Endothelial cell of umbilical vein (primary cell): ENCODE measurements at regions of chr1 and their contacts with region 1.

Region 1: GRCh38 chr1:84433258-84434080 is 35.2 kb downstream of the DNASE2B start:
- DNase-seq: peak; percentile 81
- H3K4me3 ChIP-seq: peak overlapping the region in 1 of 3 experiments; percentile 52
- H3K27ac ChIP-seq: peak overlapping the region; percentile 69
- H3K4me1 ChIP-seq: peaks cover 5% of the 10 kb centered on the region
- H3K27me3 ChIP-seq: no peaks in the 10 kb centered on the region
- CTCF ChIP-seq: peak; percentile 64 to 67
- POLR2A ChIP-seq: no peak

Region 2: GRCh38 chr1:83931658-83932253 is 501.7 kb before region 1 on chr1:
- CTCF ChIA-PET with region 1: interaction called, 4 read pairs
- POLR2A ChIA-PET with region 1: no interaction called
- dilution Hi-C with region 1: no loop called
- intact Hi-C with region 1: loop called (anchors 1 kb)
- DNase-seq: peak; percentile 48
- H3K4me3 ChIP-seq: no peak overlapping the region
- H3K27ac ChIP-seq: no peak overlapping the region
- H3K4me1 ChIP-seq: no peaks in the 10 kb centered on the region
- H3K27me3 ChIP-seq: no peaks in the 10 kb centered on the region
- CTCF ChIP-seq: peak; percentile 33 to 42
- POLR2A ChIP-seq: no peak

Region 3: GRCh38 chr1:84174051-84174556 is 259.4 kb before region 1 on chr1:
- CTCF ChIA-PET with region 1: interaction called, 3 read pairs
- POLR2A ChIA-PET with region 1: no interaction called
- dilution Hi-C with region 1: no loop called
- intact Hi-C with region 1: loop called (anchors 1 kb)
- DNase-seq: peak; percentile 88
- H3K4me3 ChIP-seq: peak overlapping the region in 1 of 3 experiments; percentile 48
- H3K27ac ChIP-seq: peak overlapping the region; percentile 100
- H3K4me1 ChIP-seq: peaks cover 64% of the 10 kb centered on the region
- H3K27me3 ChIP-seq: no peaks in the 10 kb centered on the region
- CTCF ChIP-seq: no peak
- POLR2A ChIP-seq: no peak

Region 4: DNA sequence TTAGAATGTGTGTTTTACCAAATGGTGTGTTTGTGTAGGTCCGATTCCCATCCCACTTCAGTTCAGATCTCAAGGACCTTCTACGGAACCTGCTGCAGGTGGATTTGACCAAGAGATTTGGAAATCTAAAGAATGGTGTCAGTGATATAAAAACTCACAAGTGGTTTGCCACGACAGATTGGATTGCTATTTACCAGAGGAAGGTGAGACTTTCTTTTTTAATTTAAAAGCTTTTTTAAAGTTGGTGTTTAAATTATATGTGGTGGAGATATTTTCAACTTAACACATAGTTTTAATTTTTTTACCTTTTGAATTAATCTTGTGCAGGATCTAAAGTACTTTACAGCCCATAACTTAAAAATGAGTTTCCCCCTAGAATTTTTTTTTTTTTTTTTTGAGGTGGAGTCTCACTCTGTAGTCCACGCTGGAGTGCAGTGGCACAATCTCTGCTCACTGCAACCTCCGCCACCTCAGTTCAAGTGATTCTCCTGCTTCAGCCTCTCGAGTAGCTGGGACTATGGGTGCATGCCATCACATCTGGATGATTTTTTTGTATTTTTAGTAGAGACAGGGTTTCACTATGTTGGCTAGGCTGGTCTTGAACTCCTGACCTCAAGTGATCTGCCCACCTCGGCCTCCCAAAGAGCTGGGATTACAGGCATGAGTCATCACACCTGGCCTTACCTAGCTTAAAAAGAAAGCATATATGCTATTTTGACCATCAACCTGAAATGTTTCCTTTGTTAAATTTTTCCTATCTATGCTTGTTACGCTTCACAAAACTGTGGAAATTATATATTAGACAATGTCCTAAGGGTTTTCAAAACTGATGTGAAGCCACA is 219.1 kb before region 1 on chr1:
- CTCF ChIA-PET with region 1: interaction called, 3 read pairs
- POLR2A ChIA-PET with region 1: no interaction called
- dilution Hi-C with region 1: no loop called
- intact Hi-C with region 1: loop called (anchors 5 kb)
- DNase-seq: no peak
- H3K4me3 ChIP-seq: no peak overlapping the region
- H3K27ac ChIP-seq: no peak overlapping the region
- H3K4me1 ChIP-seq: no peaks in the 10 kb centered on the region
- H3K27me3 ChIP-seq: no peaks in the 10 kb centered on the region
- CTCF ChIP-seq: no peak
- POLR2A ChIP-seq: no peak

Region 5: GRCh38 chr1:84298328-84298683 is 135.2 kb before region 1 on chr1:
- CTCF ChIA-PET with region 1: interaction called, 18 read pairs
- POLR2A ChIA-PET with region 1: no interaction called
- dilution Hi-C with region 1: no loop called
- intact Hi-C with region 1: loop called (anchors 1 kb)
- DNase-seq: peak; percentile 61
- H3K4me3 ChIP-seq: peak overlapping the region; percentile 72 to 94 (median 78)
- H3K27ac ChIP-seq: peak overlapping the region; percentile 75
- H3K4me1 ChIP-seq: peaks cover 46% of the 10 kb centered on the region
- H3K27me3 ChIP-seq: no peaks in the 10 kb centered on the region
- CTCF ChIP-seq: no peak
- POLR2A ChIP-seq: peak; percentile 73

Region 6: DNA sequence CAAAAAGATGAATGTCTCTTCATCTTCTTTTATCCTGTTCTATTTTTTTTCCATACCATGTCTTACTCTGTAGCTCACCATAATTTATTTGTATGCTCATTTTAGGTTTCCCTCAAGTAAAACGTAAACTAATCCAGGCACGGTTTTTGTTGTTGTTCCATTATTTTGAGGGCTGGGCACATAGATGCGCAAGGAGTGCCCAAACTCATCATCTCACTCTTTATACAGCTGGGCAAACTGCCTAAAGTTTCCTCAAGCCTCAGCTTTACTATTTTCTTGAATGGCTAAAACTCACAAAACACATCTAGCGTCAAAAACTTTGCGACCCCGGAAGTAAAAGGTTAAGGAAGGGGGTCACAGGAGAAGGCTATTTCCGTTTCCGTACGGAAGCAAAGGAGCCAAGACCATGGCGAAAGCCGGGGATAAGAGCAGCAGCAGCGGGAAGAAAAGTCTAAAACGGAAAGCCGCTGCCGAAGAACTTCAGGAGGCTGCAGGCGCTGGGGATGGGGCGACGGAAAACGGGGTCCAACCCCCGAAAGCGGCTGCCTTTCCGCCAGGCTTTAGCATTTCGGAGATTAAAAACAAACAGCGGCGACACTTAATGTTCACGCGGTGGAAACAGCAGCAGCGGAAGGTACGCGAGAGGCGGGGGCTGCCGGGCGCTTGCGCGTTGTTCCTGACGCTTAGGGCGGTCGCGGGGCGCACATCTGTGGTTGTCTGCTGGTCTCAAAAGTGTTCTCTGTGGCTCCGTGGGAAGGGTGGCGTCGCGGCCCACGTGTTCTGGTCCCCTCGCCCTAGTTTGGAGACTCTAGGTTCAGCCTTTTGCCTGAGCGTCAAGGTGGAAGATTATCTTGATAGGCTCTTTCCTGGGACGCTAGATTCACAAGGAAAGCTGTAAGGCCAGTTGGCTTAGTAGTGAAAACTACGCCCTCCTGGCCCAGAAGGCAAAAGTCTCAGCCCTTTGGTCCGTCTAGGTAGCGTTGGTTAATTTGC is 45.7 kb after region 1 on chr1 and contains the start of gene RPF1:
- CTCF ChIA-PET with region 1: no interaction called
- POLR2A ChIA-PET with region 1: no interaction called
- dilution Hi-C with region 1: no loop called
- intact Hi-C with region 1: no loop called
- DNase-seq: peak; percentile 85
- H3K4me3 ChIP-seq: peak within 1 kb of the TSS; percentile 59 to 95 (median 64)
- H3K27ac ChIP-seq: peak within 1 kb of the TSS; percentile 66
- H3K4me1 ChIP-seq: peaks cover 17% of the 10 kb centered on the region
- H3K27me3 ChIP-seq: no peaks in the 10 kb centered on the region
- CTCF ChIP-seq: no peak
- POLR2A ChIP-seq: peak; percentile 68
- total RNA-seq, gene RPF1: 32.6 and 34.3 TPM in 2 replicates